CD4-positive, alpha-beta T cell (primary cell): ENCODE measurements at regions of chr12 and their contacts with region 1.

Region 1: GRCh38 chr12:106831699-106832098 is 57.2 kb downstream of the RIC8B start:
- DNase-seq: no peak
- ATAC-seq: no peak
- H3K4me3 ChIP-seq: no peak overlapping the region
- H3K4me3 Mint-ChIP-seq: no peak overlapping the region
- H3K27ac ChIP-seq: no peak overlapping the region
- H3K27ac Mint-ChIP-seq: no peak overlapping the region
- H3K4me1 ChIP-seq: no peaks in the 10 kb centered on the region
- H3K4me1 Mint-ChIP-seq: no peaks in the 10 kb centered on the region
- H3K27me3 ChIP-seq: no peaks in the 10 kb centered on the region
- H3K27me3 Mint-ChIP-seq: no peaks in the 10 kb centered on the region
- CTCF ChIP-seq: no peak

Region 2: DNA sequence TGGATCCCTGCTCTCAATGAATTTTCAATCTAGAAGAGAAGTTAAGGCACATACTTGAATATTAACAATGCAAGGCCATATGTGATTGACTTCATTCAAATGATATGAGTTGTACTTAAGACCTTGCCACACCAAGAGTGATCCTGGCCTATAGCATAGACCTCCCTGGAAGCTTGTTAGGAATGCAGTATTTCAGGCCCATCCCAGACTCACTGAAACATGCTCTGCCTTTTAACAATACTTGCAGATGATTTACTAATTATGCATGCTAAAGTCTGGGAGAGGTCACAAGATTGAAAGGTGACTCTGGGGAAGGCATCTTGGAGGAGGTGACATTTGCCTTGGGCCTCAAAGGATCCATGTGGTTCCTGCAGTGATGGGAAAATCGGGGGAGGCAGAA is 205.7 kb before region 1 on chr12:
- CTCF ChIA-PET with region 1: no interaction called
- POLR2A ChIA-PET with region 1: no interaction called
- intact Hi-C with region 1: no loop called
- DNase-seq: no peak
- ATAC-seq: no peak
- H3K4me3 ChIP-seq: no peak overlapping the region
- H3K4me3 Mint-ChIP-seq: no peak overlapping the region
- H3K27ac ChIP-seq: no peak overlapping the region
- H3K27ac Mint-ChIP-seq: no peak overlapping the region
- H3K4me1 ChIP-seq: no peaks in the 10 kb centered on the region
- H3K4me1 Mint-ChIP-seq: no peaks in the 10 kb centered on the region
- H3K27me3 ChIP-seq: no peaks in the 10 kb centered on the region
- H3K27me3 Mint-ChIP-seq: peaks cover 17% of the 10 kb centered on the region
- CTCF ChIP-seq: no peak

Region 3: DNA sequence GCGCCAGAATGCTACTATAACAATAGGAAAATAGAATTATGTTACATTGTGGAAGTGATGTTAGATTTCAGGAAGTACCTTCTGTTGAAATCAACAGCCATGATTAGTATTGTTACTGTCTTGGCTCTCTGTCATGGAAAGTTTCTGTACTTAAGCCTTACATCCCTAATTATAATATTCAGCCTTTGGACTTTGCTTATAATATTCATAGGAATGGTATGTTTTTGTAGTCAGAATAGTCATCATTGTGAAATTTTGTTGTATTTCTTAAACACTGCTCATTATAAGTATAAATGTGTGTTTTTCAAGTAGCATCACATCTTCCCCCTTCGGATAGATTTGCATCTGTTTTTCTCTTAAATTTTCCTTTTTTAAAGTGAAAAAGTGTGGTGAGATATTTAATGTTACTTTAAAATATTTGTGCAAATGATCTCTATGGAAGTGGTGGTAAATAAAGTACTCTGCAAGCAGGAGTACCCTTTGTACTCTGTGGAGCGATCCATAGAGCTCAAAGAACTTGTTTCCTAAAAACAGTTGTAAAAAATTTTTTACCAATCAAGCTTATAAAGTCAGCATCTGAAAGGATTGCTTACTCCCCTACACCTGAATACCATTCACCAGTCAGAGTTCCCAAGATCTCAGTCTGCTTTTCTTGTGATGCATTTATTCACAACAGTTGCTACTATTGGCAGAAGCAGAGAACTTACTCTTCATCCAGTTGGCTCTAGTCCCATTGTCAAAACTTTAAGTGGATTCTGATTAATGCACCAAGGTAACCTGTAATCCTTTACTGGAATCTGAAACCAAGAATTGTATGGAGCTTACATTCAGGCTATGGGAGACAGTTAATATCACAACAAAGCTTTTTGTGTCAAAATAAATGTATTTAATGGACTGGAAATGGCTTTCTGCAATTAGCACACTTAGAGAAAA is 30.6 kb after region 1 on chr12:
- CTCF ChIA-PET with region 1: no interaction called
- POLR2A ChIA-PET with region 1: no interaction called
- intact Hi-C with region 1: loop called in 1 of 2 experiments (anchors 2 kb)
- DNase-seq: no peak
- ATAC-seq: no peak
- H3K4me3 ChIP-seq: no peak overlapping the region
- H3K4me3 Mint-ChIP-seq: no peak overlapping the region
- H3K27ac ChIP-seq: no peak overlapping the region
- H3K27ac Mint-ChIP-seq: no peak overlapping the region
- H3K4me1 ChIP-seq: no peaks in the 10 kb centered on the region
- H3K4me1 Mint-ChIP-seq: no peaks in the 10 kb centered on the region
- H3K27me3 ChIP-seq: no peaks in the 10 kb centered on the region
- H3K27me3 Mint-ChIP-seq: no peaks in the 10 kb centered on the region
- CTCF ChIP-seq: no peak

Region 4: GRCh38 chr12:106897082-106897481 is 65.4 kb after region 1 on chr12:
- CTCF ChIA-PET with region 1: no interaction called
- POLR2A ChIA-PET with region 1: no interaction called
- intact Hi-C with region 1: no loop called
- DNase-seq: no peak
- ATAC-seq: no peak
- H3K4me3 ChIP-seq: no peak overlapping the region
- H3K4me3 Mint-ChIP-seq: no peak overlapping the region
- H3K27ac ChIP-seq: no peak overlapping the region
- H3K27ac Mint-ChIP-seq: no peak overlapping the region
- H3K4me1 ChIP-seq: no peaks in the 10 kb centered on the region
- H3K4me1 Mint-ChIP-seq: peaks cover 8% of the 10 kb centered on the region
- H3K27me3 ChIP-seq: no peaks in the 10 kb centered on the region
- H3K27me3 Mint-ChIP-seq: peaks cover 10% of the 10 kb centered on the region
- CTCF ChIP-seq: no peak